ENCODE measurements at regions of chr7 and their contacts with region 1.

Region 1: GRCh38 chr7:77188731-77189437 is 10.7 kb downstream of the FGL2 start:
- DNase-seq: no peak
- ATAC-seq: no peak
- H3K4me3 ChIP-seq: no peak overlapping the region
- H3K4me3 Mint-ChIP-seq: no peak overlapping the region
- H3K27ac ChIP-seq: no peak overlapping the region
- H3K27ac Mint-ChIP-seq: no peak overlapping the region
- H3K4me1 ChIP-seq: peaks cover 5% of the 10 kb centered on the region
- H3K4me1 Mint-ChIP-seq: peaks cover 10% of the 10 kb centered on the region
- H3K27me3 ChIP-seq: no peaks in the 10 kb centered on the region
- H3K27me3 Mint-ChIP-seq: no peaks in the 10 kb centered on the region
- CTCF ChIP-seq: no peak

Region 2: GRCh38 chr7:77205706-77206105 is 16.8 kb after region 1 on chr7:
- CTCF ChIA-PET with region 1: no interaction called
- POLR2A ChIA-PET with region 1: no interaction called
- intact Hi-C with region 1: loop called in 1 of 2 experiments (anchors 2 kb)
- DNase-seq: no peak
- ATAC-seq: no peak
- H3K4me3 ChIP-seq: no peak overlapping the region
- H3K4me3 Mint-ChIP-seq: no peak overlapping the region
- H3K27ac ChIP-seq: no peak overlapping the region
- H3K27ac Mint-ChIP-seq: no peak overlapping the region
- H3K4me1 ChIP-seq: no peaks in the 10 kb centered on the region
- H3K4me1 Mint-ChIP-seq: peaks cover 2% of the 10 kb centered on the region
- H3K27me3 ChIP-seq: no peaks in the 10 kb centered on the region
- H3K27me3 Mint-ChIP-seq: no peaks in the 10 kb centered on the region
- CTCF ChIP-seq: no peak

Region 3: DNA sequence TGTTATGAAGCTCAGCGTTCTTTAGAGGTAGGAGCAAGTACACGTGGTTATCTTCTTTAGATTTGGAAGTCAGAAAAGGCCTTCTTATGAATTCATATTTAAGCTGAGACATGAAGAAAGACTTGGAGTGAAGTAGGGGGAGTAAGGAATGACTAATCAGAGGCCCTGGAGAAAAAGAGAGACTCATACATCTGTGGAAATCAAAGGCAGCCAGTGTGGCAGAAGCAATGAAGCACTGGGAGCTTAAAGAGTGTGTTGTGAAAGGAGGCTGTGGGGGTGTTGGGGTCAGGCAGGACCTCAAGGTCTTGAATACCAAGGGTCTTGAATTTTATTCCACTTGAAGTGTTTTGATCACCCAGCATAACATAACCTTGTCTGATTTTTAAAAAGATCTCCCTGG is 46.4 kb after region 1 on chr7:
- CTCF ChIA-PET with region 1: no interaction called
- POLR2A ChIA-PET with region 1: no interaction called
- intact Hi-C with region 1: no loop called
- DNase-seq: no peak
- ATAC-seq: no peak
- H3K4me3 ChIP-seq: no peak overlapping the region
- H3K4me3 Mint-ChIP-seq: no peak overlapping the region
- H3K27ac ChIP-seq: no peak overlapping the region
- H3K27ac Mint-ChIP-seq: no peak overlapping the region
- H3K4me1 ChIP-seq: peaks cover 13% of the 10 kb centered on the region
- H3K4me1 Mint-ChIP-seq: peaks cover 13% of the 10 kb centered on the region
- H3K27me3 ChIP-seq: no peaks in the 10 kb centered on the region
- H3K27me3 Mint-ChIP-seq: no peaks in the 10 kb centered on the region
- CTCF ChIP-seq: no peak

Measured in CD8-positive, alpha-beta T cell (primary cell).